Left cardiac atrium (tissue), 4 donors: ENCODE measurements at regions of chr1 and their contacts with region 1.

Region 1: GRCh38 chr1:201447911-201448871 is 20.8 kb downstream of the PHLDA3 start:
- DNase-seq: peak; percentile 84
- ATAC-seq: peak; percentile 82 to 83

Region 2: GRCh38 chr1:201511941-201512539 is 63.8 kb after region 1 on chr1:
- intact Hi-C with region 1: loop called (anchors 10 kb)
- DNase-seq: peak; percentile 77
- ATAC-seq: peak; percentile 78 to 83